Sigmoid colon (tissue), 7 donors: ENCODE measurements at regions of chr20 and their contacts with region 1.

Region 1: DNA sequence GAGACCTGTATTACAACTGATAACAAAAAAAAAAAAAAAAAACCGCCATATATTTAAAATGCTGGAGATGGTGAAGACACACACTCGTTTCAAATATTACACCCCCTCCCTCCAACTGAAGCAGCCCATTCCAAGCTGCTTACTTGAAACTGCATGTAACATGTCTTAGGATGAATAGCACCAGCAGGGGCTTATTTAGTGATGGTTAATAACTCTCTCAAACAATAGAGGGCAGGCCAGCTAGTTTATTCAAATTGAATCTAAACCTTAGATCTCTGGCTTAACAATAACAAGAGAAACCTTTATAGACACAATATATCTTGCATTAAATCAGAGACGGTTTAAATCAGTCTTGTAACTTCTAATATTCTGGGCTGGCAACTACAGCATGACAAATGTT is 9.3 kb upstream of the JPH2 start:
- DNase-seq: no peak
- H3K4me3 ChIP-seq: no peak overlapping the region
- H3K27ac ChIP-seq: peak overlapping the region in 1 of 4 donors; percentile 28
- H3K4me1 ChIP-seq: peaks cover 0 to 23% (median 5%) of the 10 kb centered on the region in 4 donors
- H3K27me3 ChIP-seq: no peaks in the 10 kb centered on the region
- CTCF ChIP-seq: no peak
- EP300 ChIP-seq: no peak
- POLR2A ChIP-seq: no peak

Region 2: DNA sequence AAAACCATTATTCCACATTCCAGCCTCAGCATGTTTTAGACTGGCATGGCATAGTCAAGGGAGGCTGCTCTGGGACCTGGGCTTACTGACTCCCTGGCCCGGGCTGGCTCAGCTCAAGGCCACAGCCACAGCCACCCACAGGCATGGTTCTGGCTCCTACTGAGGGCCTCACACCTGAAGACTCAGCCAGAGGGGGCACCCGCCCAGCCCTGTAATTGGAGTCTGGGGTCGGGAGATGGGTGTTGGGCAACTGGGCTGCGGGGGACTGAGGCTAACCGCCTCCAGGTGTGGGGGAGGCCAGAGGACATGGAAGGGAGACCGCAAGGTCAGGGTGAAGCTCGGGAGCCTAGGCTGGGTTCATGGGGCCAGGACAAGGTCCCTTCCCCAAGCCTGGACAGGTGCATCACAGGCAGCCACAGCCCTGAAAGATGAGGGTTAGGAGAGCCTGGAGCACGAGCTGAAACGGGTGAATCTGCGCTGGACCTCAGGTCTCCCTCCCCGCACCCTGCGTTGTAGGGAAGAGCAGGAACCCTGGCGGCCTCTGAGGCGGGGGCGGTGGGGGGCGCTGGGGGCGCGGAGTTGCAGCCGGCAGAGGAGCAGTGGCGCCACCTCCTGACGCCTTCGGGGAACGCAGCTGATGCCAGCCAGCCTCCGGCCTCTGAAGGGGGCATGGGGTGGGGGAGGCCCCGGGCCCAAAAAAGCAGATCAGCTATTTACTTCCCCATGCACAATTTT is 806.2 kb before region 1 on chr20:
- intact Hi-C with region 1: no loop called
- DNase-seq: no peak
- H3K4me3 ChIP-seq: no peak overlapping the region
- H3K27ac ChIP-seq: peak overlapping the region in 3 of 4 donors; percentile 49 to 69 (median 64)
- H3K4me1 ChIP-seq: peaks cover 0 to 26% (median 19%) of the 10 kb centered on the region in 4 donors
- H3K27me3 ChIP-seq: no peaks in the 10 kb centered on the region
- CTCF ChIP-seq: no peak
- EP300 ChIP-seq: no peak
- POLR2A ChIP-seq: no peak

Region 3: DNA sequence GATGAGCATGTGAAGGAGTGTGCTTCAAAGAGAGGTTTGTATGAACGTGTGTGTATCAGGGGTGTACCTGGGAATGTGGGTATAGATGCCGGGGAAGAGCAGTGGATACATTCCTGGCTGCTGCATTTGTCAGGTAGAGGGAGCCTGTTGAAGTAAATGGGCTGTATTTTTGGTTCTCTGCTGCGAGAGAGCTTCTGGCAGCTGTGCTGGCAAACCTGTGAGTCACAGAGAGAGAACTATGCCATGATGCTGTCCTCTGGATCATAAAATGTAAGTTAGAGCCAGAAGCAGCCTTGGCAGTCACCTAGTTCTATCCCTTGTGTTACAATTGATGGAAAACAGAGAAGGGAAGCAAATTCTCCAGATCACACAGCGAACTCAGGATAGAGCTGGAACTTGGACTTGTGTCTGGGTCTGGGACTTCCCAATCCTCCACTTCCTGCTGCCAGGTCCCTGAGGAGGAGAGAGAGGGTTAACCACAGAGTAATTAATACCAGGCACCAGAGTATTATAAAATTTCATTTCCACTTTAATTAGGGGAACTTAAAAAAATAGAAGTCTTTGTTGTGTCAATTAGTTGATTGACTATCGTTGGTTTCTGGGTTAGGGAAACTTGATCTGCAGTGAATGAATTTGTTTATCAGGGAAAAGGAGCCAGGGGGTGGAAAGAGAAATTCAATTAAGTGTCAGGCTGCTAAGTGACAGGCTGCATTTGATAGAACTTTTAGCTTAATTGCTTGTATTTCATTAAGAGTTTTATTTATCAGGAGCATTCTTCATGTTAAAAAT is 428.4 kb before region 1 on chr20:
- intact Hi-C with region 1: loop called (anchors 10 kb)
- DNase-seq: no peak
- H3K4me3 ChIP-seq: no peak overlapping the region
- H3K27ac ChIP-seq: peak overlapping the region in 3 of 4 donors; percentile 26 to 48 (median 31)
- H3K4me1 ChIP-seq: peaks cover 0 to 24% (median 20%) of the 10 kb centered on the region in 4 donors
- H3K27me3 ChIP-seq: peaks cover 0 to 6% (median 0%) of the 10 kb centered on the region in 3 donors
- CTCF ChIP-seq: no peak
- EP300 ChIP-seq: no peak
- POLR2A ChIP-seq: no peak